ENCODE measurements at regions of chr18 and their contacts with region 1.

Region 1: DNA sequence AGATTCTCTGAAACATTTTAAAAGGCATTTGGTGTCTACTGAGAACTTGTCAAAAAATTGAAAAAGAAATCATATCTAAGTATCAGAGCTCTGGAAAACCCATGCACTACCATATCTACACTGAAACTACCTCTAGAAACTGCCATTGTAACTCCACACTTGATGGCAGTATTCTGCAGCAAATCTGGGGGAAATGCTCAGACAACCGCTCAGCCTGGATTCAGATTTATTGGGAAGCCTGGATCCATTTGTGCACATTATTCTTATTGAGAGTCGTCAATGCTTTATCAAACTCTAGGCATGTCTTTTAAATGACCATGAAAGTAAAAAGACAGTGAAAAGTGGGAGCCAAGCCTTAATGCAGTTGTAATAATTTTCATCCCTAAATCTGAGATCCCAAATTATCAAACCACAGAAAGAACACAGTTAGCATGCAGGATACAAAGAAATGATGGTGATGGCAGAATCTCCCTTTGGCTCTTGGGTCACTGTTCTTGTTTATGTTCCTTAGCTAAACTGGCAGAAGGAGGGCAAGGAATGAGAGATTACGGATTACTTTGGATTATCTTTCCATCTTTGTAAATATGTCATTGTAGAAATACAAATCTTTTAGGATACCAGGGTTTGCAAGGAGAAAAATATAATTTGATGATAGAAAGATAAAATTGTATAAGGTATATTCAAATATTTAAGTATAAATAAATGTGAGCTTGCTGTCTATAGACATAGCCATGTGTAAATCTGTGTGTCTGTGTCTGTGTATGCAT is 512.1 kb upstream of the SYT4 start:
- DNase-seq: no peak
- ATAC-seq: no peak

Region 2: GRCh38 chr18:43830947-43831346 is 41.5 kb after region 1 on chr18:
- intact Hi-C with region 1: loop called in 1 of 2 experiments (anchors 10 kb)
- DNase-seq: no peak
- ATAC-seq: no peak